ENCODE measurements at regions of chr12 and their contacts with region 1.

Region 1: DNA sequence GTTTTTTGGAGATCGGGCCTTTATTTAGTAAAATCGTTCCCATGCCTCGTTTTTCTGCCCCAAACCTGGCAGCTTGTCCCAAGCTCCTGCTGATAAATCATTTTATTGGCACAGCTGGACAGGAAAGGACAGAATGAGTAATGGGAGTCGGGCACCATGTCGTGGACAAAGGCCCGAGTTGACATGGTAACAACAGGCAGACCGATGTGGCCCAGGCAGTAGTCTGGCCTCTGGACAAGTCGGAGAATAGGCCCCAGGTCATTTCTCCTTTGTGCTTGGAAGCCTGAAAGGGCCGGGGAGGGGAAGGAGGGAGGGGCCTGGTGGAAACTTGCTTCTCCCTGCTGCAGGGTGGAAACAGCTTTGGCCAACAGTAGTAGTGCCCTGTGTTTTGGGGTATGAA is 234.9 kb downstream of the SUDS3 start:
- DNase-seq: no peak
- ATAC-seq: no peak

Region 2: DNA sequence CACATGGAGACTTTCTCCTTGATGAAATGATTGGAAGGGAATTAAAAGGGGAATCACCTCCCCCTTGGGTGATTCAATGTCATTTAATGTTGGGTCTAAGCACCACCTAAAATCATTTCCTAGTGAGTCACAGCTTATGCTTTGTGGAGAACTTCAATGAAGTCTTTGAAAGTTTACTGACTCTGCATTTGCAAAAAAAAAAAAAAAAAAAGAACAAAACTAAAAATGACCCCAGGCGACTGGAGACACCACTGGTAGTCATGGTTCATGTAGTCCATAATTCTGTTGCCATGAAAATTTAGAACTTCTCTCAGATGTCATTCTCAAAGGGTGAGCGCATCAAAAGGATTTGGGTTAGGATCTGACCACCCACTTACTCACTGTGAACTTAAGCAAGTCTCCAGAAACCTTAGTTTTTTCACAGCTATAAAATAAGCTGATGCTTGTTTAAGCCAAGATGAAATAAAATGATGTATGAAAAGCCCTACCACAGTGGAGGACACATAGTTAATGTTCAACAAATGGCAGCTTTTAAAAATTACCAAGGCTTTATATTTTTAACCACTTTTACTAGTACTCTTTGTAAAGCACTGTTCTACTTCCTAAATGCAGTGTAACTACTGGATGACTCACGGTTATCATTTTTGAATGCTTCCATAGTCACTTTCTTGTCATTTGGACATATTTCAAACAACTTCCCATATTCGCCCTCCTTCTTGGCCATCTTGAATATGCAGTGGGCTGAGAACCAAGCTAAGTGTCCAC is 624.4 kb before region 1 on chr12:
- intact Hi-C with region 1: no loop called
- DNase-seq: no peak
- ATAC-seq: no peak

Region 3: DNA sequence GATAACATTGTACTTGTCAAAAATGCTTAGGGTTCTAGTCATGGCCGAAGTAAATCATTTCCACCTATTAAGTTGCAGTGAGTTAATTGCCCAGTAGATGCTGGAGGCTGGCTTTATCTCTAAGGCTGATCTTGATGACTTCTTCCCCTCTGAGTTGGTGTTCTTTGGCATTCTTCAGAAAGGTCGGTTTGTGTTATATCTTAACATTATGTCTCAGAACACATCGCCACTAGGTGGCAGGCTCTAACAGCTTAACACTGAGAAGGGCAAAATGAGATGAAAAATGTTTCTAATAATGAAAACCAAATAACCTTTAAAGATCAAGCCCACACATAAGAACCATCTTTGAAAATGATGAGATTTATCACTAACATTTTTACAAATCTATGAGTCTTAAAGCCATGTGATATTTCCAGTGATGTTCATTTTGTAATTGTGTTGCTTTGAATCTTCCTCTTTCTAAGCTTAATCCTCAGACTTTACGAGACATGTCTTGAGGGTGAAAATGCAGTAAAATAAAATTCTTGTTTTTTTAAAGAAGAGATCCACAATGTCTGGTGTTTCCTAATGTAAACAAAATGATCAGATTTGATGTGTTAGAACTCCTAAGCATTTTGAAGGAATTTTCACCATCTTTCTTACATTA is 206.3 kb before region 1 on chr12:
- intact Hi-C with region 1: loop called (anchors 10 kb)
- DNase-seq: peak; percentile 51
- ATAC-seq: peak; percentile 68

Region 4: DNA sequence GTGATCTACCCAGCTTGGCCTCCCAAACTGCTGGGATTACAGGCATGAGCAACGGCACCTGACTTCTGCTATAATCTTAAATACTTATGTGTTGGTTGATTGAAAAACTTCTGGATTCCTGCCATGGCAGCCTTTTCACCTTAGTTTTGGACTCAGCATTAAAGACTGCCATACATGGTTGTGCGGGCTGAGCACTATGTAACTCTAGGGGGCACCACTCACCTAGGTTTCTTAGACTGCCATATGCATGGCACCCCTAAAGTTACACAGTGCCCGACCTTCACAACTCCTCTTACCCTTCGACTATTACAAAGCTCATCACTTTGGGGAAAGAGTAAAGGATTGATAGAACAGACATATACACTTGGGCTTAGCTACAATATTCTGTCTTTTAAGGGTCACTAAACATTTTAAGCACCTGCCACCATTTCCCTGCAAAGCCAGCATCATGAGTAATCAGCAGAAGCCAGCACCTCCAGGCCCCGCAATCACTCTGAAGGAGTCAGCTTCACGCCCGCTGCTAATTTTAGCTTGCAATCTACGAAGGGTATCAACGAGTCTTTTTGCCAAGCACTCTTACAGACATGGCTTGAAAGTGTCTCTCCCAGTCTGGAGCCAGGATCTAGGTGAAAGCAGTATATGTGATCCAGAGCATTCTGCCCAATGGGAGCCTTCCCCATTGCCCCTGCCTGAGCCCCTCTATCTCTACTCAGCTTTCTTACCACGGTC is 175.1 kb before region 1 on chr12:
- intact Hi-C with region 1: loop called (anchors 10 kb)
- DNase-seq: no peak
- ATAC-seq: peak; percentile 66

Region 5: DNA sequence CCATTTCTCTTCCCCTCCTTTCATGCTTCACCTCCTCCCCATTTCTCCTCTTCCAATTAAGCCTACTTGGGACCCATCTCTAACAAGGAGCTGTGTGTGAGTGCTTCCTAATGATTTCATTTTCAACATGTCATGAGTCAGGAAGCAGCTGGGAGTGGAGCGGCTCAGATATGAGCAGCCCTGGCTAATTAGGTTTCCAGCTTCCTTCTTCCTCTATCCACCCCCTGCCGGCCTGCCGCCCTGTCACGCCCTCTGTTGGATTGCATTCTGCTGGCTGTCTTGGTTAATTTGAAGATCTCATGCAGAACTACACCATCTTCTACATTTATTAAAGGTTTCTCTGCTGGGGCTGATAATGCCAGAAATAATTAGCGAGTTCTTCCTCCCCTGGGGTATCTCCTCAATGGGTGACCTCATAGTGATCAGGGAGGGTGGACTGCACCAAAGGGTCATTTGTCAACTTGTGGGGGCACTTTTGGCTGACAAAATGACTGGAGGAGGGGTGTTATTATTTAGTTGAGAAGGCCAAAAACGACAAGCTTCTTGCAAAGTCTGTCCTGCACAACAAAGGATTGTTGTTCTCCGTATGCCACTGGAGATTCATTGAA is 69.2 kb after region 1 on chr12:
- intact Hi-C with region 1: no loop called
- DNase-seq: peak; percentile 41
- ATAC-seq: peak; percentile 76

Measured in Right ventricle myocardium superior (tissue), 1 donor.